CD8-positive, alpha-beta T cell (primary cell): ENCODE measurements at regions of chr4 and their contacts with region 1.

Region 1: GRCh38 chr4:11232015-11232414 is 196.7 kb downstream of the HS3ST1 start:
- DNase-seq: no peak
- ATAC-seq: no peak
- H3K4me3 ChIP-seq: no peak overlapping the region
- H3K4me3 Mint-ChIP-seq: no peak overlapping the region
- H3K27ac ChIP-seq: no peak overlapping the region
- H3K27ac Mint-ChIP-seq: no peak overlapping the region
- H3K4me1 ChIP-seq: no peaks in the 10 kb centered on the region
- H3K4me1 Mint-ChIP-seq: no peaks in the 10 kb centered on the region
- H3K27me3 ChIP-seq: no peaks in the 10 kb centered on the region
- H3K27me3 Mint-ChIP-seq: no peaks in the 10 kb centered on the region
- CTCF ChIP-seq: no peak

Region 2: GRCh38 chr4:11376571-11376970 is 144.6 kb after region 1 on chr4:
- CTCF ChIA-PET with region 1: no interaction called
- POLR2A ChIA-PET with region 1: no interaction called
- intact Hi-C with region 1: loop called in 1 of 2 experiments (anchors 5 kb)
- DNase-seq: no peak
- ATAC-seq: no peak
- H3K4me3 ChIP-seq: no peak overlapping the region
- H3K4me3 Mint-ChIP-seq: no peak overlapping the region
- H3K27ac ChIP-seq: no peak overlapping the region
- H3K27ac Mint-ChIP-seq: no peak overlapping the region
- H3K4me1 ChIP-seq: no peaks in the 10 kb centered on the region
- H3K4me1 Mint-ChIP-seq: no peaks in the 10 kb centered on the region
- H3K27me3 ChIP-seq: no peaks in the 10 kb centered on the region
- H3K27me3 Mint-ChIP-seq: no peaks in the 10 kb centered on the region
- CTCF ChIP-seq: no peak

Region 3: GRCh38 chr4:11505221-11505971 is 273.4 kb after region 1 on chr4:
- CTCF ChIA-PET with region 1: no interaction called
- POLR2A ChIA-PET with region 1: no interaction called
- intact Hi-C with region 1: no loop called
- DNase-seq: no peak
- ATAC-seq: peak; percentile 49
- H3K4me3 ChIP-seq: no peak overlapping the region
- H3K4me3 Mint-ChIP-seq: no peak overlapping the region
- H3K27ac ChIP-seq: no peak overlapping the region
- H3K27ac Mint-ChIP-seq: peak overlapping the region; percentile 60
- H3K4me1 ChIP-seq: no peaks in the 10 kb centered on the region
- H3K4me1 Mint-ChIP-seq: peaks cover 9% of the 10 kb centered on the region
- H3K27me3 ChIP-seq: no peaks in the 10 kb centered on the region
- H3K27me3 Mint-ChIP-seq: peaks cover 2% of the 10 kb centered on the region
- CTCF ChIP-seq: no peak